ENCODE measurements at regions of chr12 and their contacts with region 1.

Region 1: GRCh38 chr12:95998611-95999286 is 2.6 kb upstream of the HAL start:
- DNase-seq: no peak

Region 2: GRCh38 chr12:95918194-95918993 is 80.4 kb before region 1 on chr12:
- intact Hi-C with region 1: loop called (anchors 2 kb)
- DNase-seq: no peak

Measured in cardiac septum (tissue), 1 donor.